Head of caudate nucleus (tissue), 42 donors: ENCODE measurements at regions of chr9 and their contacts with region 1.

Region 1: DNA sequence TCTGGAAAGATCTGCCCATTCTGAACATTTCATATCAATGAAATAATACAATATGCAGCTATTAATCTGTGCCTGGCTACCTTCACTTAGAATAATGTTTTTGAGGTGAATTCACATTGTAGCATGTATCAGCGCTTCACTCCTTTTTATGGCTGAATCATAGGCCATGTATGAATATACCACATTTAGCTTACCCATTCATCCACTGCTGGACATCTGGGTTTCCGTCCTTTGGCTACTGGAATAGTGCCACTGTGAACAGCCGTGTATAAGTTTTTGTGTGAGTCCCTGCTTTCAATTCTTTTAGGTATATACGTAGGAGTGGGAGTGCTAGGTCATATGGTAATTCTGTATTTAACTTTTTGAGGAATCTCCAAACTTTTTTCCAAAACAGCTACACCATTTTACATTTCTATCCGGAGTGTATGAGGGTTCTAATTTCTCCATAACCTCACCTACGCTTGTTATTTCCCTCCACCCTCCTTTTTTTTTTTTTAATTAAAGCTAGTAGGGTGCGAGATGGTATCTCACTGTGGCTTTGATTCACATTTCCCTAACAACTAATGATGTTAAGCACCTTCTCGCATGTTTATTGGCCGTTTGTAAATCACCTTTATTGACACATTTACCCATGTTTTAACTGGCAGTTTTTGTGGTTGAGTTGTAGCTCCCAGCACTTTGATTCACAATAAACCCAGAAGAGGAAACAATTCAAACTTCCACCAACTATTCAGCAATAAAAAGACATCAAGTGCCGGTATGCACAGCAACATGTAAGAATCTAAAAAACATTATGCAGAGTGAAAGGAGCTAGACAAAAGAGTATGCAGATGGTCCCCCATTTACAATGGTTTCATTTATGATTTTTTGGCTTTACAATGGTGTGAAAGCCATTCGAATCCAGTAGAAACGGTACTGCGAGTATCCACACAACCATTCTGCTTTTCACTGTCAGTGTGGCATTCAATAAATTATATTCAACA is 8.1 kb downstream of the SEMA4D start:
- DNase-seq: no peak

Region 2: GRCh38 chr9:89284076-89284475 is 205.8 kb before region 1 on chr9:
- intact Hi-C with region 1: no loop called
- DNase-seq: no peak

Region 3: DNA sequence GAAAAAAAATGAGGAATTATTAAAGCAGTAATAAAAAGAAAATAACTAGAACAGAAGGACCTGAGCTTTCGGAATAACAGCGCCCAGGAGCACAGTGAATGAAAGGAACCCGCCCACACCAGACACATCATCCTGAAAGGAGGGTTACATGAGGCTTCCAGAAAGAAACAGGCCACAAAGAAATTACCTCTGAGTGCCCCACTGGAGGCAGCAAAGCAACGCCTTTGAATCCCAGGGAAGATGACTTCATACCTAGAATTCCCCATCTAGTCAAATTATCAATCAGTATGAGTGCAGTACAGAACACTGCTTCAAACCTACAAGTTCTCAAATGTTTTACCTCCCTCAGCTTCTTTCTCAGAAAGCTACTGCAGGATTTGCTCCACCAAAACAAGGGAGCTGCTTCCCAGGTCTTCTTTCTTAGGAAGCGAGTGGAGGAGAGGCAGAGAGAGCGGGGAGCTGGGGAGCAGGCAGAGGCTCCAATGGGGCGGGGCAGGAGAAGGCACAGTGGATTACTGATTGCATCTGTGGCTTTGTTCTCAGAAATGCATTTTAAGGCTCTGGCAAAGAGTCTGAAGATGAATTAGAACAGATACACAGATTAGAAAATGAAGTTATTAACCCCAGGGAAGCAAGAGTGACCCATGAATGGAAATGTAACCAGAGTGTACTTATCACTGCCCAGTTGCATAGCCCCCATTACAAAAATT is 79.0 kb before region 1 on chr9:
- intact Hi-C with region 1: no loop called
- DNase-seq: peak in 23 of 42 donors; percentile 34 to 80 (median 64)

Region 4: DNA sequence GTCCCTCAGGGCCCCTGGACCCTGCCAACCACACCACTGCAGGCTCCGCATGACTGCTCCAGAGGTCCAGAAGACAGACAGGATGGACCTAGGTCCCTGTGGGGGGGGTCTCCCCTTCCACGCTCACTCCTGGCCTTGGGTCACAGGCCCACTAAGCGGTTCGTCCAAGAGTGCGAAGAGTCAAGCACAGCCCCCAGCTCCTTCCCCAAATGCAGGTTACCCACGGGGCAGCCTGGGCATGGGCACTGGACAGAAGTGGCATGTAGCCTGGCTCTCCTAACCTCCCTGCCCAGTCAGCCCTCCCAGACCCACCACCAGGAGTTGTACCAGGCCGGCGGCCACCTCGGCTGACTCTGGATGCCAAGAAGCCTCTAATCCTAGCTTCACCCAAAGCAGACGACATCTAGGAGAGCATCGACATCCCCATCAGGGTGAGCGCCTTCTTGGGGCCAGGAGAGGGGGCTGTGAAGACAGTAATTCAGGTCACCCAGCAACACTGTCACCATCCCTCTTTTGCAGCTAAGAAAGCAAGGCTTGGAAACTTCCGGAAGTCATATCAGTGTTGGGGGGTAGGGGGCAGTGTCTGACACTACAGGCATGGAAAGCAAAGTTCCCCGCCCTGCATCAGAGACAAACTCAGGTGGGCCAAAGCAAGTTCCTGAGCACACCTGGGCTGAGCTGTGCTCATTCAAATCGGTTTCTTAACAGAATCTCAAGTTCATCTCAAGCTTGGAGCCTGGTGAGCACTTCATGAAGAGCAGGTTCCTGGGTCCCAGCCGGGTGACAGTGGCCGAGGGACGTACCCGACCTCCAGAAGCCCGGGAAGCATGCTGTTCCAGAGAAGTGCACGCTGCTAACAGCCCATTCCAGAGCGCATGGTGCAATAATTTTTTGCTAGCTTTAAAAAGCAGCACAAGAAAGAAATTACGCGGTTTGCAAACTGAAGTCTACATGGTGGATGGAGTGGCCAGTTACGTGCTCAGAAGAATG is 60.6 kb before region 1 on chr9:
- intact Hi-C with region 1: loop called (anchors 5 kb)
- DNase-seq: no peak

Region 5: DNA sequence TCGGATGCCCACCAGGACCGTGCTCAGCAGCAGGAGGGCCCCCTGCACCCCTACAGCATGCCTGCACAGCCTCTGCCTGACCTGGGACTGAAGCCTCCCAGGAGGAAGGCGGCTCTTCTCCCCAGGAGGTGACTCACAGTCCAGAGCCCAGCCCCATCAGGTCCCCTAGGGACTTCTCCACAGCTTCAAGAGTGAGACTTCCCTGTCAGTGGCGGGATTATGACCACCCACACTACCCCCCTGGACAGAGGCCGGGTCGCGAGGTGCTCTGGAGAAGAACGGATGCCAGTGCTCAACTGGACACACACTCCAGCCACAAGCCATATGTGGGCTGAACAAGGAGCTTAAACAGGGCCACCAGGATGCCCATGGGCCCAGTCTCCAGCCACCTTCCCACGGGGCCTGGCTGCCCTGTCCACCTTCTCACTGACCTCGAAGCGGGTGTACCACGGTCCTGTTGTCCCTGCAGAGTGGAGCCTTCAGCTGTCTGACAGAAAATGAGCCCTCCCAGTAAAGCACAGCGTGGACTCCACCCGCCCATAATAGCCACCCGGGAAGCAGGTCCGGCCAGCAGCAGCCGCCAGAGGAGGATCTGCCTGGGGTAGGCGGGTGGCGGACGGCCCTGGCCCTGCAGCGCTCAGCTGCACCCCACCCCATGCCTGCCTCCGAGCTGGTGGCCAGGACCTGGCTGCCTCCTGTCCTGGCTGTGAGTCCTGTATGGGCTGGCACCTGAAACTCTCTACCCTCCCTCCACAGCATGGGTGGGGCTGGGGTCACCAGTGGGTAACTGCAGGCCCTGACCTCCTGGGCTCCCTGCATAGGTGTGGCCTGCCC is 46.6 kb before region 1 on chr9:
- intact Hi-C with region 1: loop called (anchors 5 kb)
- DNase-seq: no peak